ENCODE measurements at regions of chr15 and their contacts with region 1.

Region 1: DNA sequence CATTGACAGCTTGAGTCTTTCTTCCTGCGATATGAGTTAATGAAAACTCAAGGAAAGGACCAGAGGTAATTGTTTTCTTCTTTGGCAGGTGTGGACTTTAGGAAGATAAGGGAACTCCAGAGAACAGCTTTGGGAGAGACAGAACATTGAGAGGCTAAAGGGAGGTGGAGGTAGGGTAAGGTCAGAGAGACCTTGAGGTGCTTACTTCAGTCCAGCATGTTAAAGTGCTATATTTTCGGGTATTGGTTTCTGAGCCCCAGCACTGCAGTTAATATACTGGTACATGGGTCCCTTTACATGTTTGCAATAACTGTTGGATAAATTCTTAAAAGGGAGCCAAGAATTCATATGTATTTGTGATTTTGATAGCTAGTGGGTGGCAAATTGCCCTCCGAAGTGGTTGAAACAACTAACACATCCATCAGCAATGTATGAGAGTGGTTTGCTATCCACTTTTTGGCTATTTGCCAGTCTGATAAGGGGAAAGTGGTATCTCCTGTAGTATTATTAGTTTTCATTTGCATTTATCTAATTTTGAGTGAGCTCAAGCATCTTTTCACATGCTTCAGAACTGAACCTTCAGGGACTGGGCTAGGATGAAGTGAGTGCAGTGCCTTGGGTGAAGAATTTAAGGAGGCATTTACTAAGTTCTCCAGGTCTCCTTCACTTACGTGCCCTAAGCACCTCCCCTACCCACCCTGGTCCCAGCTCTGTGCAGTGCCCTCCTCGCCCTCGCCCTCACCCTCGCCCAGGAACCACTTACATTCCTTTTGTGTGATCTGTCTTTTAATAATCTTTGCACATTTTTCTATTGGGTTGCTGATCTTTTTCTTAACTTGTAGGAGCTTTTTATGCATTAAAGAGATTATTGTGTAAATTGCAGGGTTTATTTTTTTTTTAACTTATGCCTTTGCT is 322.4 kb downstream of the THSD4 start:
- DNase-seq: no peak
- ATAC-seq: no peak
- H3K4me3 ChIP-seq: no peak overlapping the region
- H3K27ac ChIP-seq: no peak overlapping the region
- H3K4me1 ChIP-seq: peaks cover 8 to 11% of the 10 kb centered on the region in 2 donors
- H3K27me3 ChIP-seq: no peaks in the 10 kb centered on the region
- CTCF ChIP-seq: no peak
- POLR2A ChIP-seq: no peak

Region 2: GRCh38 chr15:71386448-71387236 is 51.0 kb before region 1 on chr15:
- in situ Hi-C with region 1: loop called in 2 of 4 experiments (anchors 5 to 10 kb)
- intact Hi-C with region 1: loop called (anchors 2 kb)
- DNase-seq: no peak
- ATAC-seq: peak in 1 of 2 donors; percentile 58
- H3K4me3 ChIP-seq: no peak overlapping the region
- H3K27ac ChIP-seq: peak overlapping the region in 1 of 4 donors; percentile 57
- H3K4me1 ChIP-seq: peaks cover 22 to 27% of the 10 kb centered on the region in 2 donors
- H3K27me3 ChIP-seq: no peaks in the 10 kb centered on the region
- CTCF ChIP-seq: peak; percentile 28 to 64 (median 47)
- POLR2A ChIP-seq: no peak

Measured in gastrocnemius medialis (tissue), 4 donors.